Upper lobe of right lung (tissue), 1 donor: ENCODE measurements at regions of chr15 and their contacts with region 1.

Region 1: GRCh38 chr15:74768771-74769342 is 13.0 kb upstream of the CSK start:
- DNase-seq: peak; percentile 74
- ATAC-seq: peak; percentile 84
- H3K4me3 ChIP-seq: no peak overlapping the region
- H3K27ac ChIP-seq: no peak overlapping the region
- H3K4me1 ChIP-seq: peaks cover 12% of the 10 kb centered on the region
- H3K27me3 ChIP-seq: no peaks in the 10 kb centered on the region
- CTCF ChIP-seq: peak; percentile 80

Region 2: DNA sequence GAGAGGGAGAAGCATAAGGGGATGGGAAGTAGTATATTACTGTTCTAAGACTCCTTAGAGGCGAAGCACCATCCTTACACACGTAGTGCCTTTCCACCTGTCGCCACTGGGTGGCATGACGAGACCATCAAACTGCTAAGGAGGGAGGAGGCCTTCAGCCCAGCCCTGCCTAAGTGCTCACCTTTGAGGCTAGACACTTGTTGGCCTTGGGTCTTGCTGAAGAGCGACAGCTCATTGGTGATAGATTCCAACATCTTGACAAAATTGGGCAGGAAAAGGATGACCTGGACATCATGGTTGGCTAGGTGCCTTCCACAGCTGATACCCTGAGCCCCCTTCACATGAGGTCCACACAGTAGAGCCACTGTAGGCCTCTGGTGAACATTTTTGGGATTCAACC is 133.6 kb before region 1 on chr15:
- intact Hi-C with region 1: loop called (anchors 5 kb)
- DNase-seq: peak; percentile 76
- ATAC-seq: peak; percentile 88
- H3K4me3 ChIP-seq: no peak overlapping the region
- H3K27ac ChIP-seq: no peak overlapping the region
- H3K4me1 ChIP-seq: no peaks in the 10 kb centered on the region
- H3K27me3 ChIP-seq: no peaks in the 10 kb centered on the region
- CTCF ChIP-seq: peak; percentile 90

Region 3: DNA sequence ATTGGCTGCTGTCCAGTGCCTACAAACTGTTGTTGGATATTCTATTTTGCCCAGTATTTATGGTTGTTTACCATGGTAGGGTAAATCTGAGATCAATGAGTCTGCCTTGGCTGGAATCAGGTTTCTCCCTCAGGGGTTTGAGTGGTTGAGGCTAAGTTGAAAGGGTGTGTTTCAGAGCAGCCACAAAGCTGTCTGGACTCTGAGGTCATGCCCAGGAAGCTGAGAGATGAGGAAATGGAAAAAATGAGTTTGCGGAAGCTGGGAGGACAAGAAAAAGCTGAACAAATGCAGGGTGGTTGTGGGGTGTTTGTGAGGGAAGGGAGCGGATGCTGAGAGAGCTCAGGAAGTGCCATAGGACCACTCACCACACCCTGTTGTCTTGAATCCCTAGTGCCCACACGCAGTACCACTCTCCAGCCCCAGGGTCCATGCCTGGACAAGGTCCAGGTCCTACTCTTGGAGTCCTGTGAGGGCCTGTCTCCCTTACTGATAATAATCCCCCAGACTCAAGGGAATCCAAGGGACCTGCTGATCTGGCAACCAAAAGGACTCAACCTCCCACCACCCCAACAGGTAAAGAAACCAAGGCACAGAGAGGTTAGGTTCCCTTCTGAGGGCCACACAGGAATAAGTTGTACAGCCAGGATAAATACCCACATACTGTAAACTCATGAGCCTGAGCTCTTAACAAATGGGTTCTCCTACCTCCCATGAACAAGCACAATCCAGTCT is 336.1 kb after region 1 on chr15:
- intact Hi-C with region 1: no loop called
- DNase-seq: no peak
- ATAC-seq: peak; percentile 84
- H3K4me3 ChIP-seq: no peak overlapping the region
- H3K27ac ChIP-seq: peak overlapping the region; percentile 36
- H3K4me1 ChIP-seq: peaks cover 16% of the 10 kb centered on the region
- H3K27me3 ChIP-seq: no peaks in the 10 kb centered on the region
- CTCF ChIP-seq: no peak